ENCODE measurements at regions of chr1 and their contacts with region 1.

Region 1: DNA sequence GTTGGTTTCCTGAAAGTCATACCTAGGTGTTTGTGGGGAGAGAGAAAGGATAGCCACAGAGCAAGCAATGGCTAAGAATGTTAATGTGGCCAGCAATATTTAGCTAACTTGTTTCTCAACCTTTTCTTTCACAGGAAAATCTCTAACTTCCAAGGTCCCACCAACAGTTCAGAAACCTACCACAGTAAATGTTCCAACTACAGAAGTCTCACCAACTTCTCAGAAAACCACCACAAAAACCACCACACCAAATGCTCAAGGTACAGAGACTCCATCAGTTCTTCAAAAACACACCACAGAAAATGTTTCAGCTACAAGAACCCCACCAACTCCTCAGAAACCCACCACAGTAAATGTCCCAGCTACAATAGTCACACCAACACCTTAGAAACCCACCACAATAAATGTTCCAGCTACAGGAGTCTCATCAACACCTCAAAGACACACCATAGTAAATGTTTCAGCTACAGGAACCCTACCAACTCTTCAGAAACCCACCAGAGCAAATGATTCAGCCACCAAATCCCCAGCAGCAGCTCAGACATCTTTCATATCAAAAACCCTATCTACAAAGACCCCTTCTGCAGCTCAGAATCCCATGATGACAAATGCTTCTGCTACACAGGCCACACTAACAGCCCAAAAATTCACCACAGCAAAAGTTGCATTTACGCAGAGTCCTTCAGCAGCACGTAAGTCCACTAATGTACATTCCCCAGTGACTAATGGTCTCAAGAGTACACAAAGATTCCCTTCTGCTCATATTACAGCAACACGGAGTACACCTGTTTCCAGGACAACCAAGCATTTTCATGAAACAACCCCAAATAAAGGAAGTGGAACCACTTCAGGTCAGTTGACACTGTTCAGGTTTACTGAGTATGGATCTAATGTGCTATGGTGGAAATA is 15.3 kb downstream of the CD55 start:
- DNase-seq: peak; percentile 41
- CTCF ChIP-seq: no peak

Region 2: GRCh38 chr1:207321079-207321789 is 15.6 kb before region 1 on chr1 and contains the start of gene CD55:
- CTCF ChIA-PET with region 1: interaction called, 21 read pairs
- POLR2A ChIA-PET with region 1: interaction called, 33 read pairs
- DNase-seq: peak; percentile 94
- CTCF ChIP-seq: peak; percentile 29

Region 3: DNA sequence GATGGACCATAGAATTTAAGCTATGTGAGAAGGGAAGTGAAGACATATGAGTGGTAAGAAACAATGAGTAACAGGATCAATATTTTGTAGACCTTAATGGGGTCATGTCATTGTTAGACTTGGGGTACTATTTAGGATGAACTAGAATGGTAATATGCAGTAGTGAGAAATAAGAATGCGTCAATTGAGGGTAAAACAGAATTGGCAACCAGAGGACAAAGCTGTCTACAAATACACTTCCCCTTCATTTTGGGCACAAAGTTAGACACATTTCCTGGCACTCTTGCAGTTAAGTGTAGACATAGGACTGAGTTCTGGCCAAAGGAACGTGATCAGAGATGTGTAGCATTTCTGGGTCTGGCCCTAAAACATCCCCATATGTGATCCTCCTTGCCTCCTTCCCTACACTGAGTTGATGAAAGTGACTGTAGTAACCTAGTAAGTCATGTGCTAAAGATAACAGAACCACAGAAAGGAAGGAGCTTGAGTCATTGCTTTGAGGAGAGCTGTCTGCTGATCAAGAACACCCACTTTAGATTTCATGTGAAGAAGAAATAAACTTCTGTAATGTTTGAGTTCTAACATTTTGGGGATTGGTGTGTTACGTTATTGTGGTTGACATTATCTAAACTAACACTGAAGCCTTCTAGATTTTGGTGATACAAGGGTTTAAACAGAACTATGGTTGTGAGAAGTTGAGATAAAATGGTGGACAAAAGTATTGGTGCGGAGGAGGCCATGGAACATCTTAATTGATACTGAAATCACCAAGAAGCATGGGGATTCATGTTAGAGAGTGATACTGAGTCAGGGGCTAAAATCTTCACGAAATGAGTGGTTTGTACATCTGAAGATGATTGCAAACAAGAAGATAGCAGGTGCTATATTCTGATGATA is 26.4 kb after region 1 on chr1:
- CTCF ChIA-PET with region 1: no interaction called
- POLR2A ChIA-PET with region 1: no interaction called
- DNase-seq: no peak
- CTCF ChIP-seq: no peak

Region 4: GRCh38 chr1:207644852-207645634 is 308.2 kb after region 1 on chr1 and contains the start of gene CR1L:
- CTCF ChIA-PET with region 1: no interaction called
- POLR2A ChIA-PET with region 1: interaction called, 10 read pairs
- DNase-seq: peak; percentile 81
- CTCF ChIP-seq: no peak